Activated CD8-positive, alpha-beta memory T cell treated with anti-CD3 and anti-CD28 coated beads, Interleukin-2, amount 10 ng/mL, durations not matched to agents 7 days and 5 days (primary cell): ENCODE measurements at regions of chr5 and their contacts with region 1.

Region 1: DNA sequence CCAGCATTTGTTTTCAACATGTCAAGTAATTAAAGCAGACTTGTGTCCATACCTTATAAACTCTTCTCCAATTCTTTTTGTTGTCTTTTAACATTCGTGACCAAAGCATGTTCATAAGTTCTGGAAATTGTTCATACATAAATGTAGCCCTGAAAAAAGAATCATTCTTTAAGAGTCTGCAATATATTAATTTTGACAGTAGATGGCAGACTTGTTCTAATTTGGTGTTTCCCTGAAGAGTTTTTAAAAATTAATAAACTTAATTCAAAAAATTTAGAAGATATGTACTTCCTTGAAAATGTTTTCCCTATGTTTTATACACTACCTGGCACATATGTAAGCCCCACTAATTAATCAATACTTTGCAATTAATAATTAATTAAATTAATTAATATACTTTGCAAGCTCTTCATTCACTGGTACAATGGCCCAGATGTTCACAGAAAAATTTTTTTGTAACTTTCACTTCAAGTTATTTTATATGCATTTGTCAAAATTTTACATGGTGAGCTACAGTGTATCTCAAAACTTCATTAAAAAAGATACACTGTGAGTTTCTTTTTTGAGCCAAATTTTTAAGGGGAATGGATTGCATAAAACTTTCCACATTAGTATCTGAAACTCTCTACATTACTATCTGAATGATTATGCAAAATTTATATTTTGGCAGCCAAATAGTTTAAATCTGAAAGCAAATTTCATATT is 42.1 kb downstream of the CLINT1 start:
- DNase-seq: no peak
- ATAC-seq: no peak
- H3K4me3 Mint-ChIP-seq: no peak overlapping the region
- H3K27ac Mint-ChIP-seq: no peak overlapping the region
- H3K4me1 Mint-ChIP-seq: peaks cover 9% of the 10 kb centered on the region
- H3K27me3 Mint-ChIP-seq: no peaks in the 10 kb centered on the region

Region 2: DNA sequence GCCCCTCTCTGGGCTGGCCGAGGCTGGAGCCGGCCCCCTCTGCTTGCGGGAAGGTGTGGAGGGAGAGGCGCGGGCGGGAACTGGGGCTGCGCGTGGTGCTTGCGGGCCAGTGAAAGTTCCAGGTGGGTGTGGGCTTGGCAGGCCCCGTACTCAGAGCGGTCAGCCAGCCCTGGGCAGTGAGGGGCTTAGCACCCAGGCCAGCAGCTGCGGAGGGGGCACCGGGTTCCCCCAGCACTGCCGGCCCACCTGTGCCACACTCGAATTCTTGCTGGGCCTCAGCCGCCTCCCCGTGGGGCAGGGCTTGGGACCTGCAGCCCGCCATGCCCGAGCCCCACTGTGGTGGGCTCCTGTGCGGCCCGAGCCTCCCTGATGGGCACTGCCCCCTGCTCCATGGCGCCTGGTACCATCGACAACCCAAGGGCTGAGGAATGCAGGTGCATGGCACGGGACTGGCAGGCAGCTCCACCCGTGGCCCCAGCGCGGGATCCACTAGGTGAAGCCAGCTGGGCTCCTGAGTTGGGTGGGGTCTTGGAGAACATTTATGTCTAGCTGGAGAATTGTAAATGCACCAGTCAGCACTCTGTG is 70.1 kb after region 1 on chr5:
- CTCF ChIA-PET with region 1: no interaction called
- DNase-seq: no peak
- ATAC-seq: no peak
- H3K4me3 Mint-ChIP-seq: no peak overlapping the region
- H3K27ac Mint-ChIP-seq: no peak overlapping the region
- H3K4me1 Mint-ChIP-seq: peaks cover 10% of the 10 kb centered on the region
- H3K27me3 Mint-ChIP-seq: no peaks in the 10 kb centered on the region

Region 3: DNA sequence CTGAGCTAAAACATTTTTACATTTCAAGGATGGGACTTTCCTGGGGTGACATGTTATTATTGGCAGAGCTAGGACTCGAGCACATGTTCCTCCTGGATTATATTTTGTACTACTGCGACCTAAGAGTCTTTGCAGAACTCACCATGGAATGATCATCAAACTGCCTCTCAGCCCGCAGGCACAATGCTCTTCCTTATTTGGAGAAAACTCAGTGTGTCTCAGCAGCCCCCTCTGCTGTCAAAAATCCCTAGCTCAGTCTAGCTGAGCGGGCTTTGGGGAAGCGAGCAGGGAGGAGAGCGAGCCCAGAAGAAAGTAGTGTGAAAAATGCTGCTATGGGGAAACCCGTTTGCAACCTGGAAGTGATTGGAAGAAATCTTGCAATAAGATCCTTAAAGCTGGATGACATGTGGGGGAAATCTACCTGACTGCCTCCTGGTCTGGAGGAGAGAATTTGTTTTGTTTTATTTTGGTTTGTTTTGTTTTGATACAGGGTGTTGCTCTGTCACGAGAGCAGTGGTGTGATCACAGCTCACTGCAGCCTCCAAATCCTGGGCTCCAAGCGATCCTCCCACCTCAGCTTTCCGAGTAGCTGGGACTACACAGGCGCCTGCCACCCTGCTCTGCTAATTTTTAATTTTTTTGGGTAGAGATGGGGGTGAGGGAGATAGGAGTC is 132.0 kb after region 1 on chr5:
- CTCF ChIA-PET with region 1: interaction called, 36 read pairs
- DNase-seq: peak; percentile 84
- ATAC-seq: peak; percentile 96
- H3K4me3 Mint-ChIP-seq: peak overlapping the region; percentile 0
- H3K27ac Mint-ChIP-seq: no peak overlapping the region
- H3K4me1 Mint-ChIP-seq: peaks cover 4% of the 10 kb centered on the region
- H3K27me3 Mint-ChIP-seq: peaks cover 26% of the 10 kb centered on the region

Region 4: DNA sequence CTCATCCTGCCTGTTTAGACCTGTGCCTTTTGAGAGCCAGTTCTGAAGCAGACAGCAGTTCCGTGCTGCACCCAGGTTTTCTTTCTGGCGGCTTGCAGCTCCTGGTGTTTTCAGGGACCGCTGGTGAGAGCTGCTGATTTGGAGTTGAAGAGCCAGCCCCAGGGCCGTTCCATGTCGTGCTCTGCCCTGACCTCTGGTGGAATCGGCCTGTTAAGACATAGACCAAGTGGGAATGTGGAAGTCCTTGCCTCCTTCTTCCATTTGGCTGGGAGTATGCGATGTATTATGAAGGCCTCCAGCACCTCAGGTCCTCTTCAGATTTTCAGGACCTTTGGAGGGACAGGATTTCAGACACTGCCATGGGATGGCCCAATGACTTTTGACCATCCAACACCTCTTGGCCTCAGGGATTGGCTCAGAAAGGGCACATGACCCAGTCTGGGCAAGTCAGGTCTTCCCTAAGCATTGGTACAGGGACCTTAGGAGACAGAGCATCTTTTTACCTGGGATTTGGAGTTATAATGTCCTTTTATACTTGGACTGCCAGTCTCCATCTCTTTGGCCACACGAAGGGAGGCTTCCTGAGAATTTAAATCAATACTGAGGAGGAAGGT is 178.2 kb after region 1 on chr5:
- CTCF ChIA-PET with region 1: interaction called, 13 read pairs
- DNase-seq: peak; percentile 61
- ATAC-seq: peak; percentile 86
- H3K4me3 Mint-ChIP-seq: no peak overlapping the region
- H3K27ac Mint-ChIP-seq: no peak overlapping the region
- H3K4me1 Mint-ChIP-seq: peaks cover 12% of the 10 kb centered on the region
- H3K27me3 Mint-ChIP-seq: peaks cover 41% of the 10 kb centered on the region